OCI-LY7 (cell line): ENCODE measurements at regions of chr16 and their contacts with region 1.

Region 1: GRCh38 chr16:29848420-29849297 is 14.4 kb downstream of the CDIPT start:
- DNase-seq: peak; percentile 83
- H3K4me3 ChIP-seq: no peak overlapping the region
- H3K27ac ChIP-seq: no peak overlapping the region
- H3K4me1 ChIP-seq: no peaks in the 10 kb centered on the region
- CTCF ChIP-seq: peak; percentile 93

Region 2: GRCh38 chr16:29694384-29695195 is 154.1 kb before region 1 on chr16:
- CTCF ChIA-PET with region 1: no interaction called
- POLR2A ChIA-PET with region 1: no interaction called
- intact Hi-C with region 1: loop called (anchors 1 kb)
- DNase-seq: no peak
- H3K4me3 ChIP-seq: no peak overlapping the region
- H3K27ac ChIP-seq: no peak overlapping the region
- H3K4me1 ChIP-seq: peaks cover 7% of the 10 kb centered on the region
- CTCF ChIP-seq: no peak

Region 3: DNA sequence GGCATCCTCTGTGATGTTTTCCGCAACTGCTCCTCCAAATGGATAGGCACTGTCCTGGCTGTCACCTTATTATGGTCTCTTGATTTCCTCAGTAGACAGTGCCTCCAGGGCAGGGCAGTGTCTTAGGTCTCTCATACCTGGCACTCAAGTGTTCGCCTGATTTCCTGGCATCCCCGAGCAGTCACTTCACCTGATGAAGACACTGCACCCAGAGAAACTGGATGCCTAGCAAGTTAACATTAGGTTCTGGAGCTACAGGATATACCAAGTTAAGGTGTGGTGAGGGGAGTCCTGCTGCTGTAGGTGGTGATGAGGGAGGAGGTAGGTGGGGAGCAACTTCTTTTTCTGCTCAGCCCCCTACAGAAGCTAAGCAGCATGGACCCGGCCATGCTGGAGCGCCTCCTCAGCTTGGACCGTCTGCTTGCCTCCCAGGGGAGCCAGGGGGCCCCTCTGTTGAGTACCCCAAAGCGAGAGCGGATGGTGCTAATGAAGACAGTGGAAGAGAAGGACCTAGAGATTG is 46.2 kb before region 1 on chr16:
- CTCF ChIA-PET with region 1: no interaction called
- POLR2A ChIA-PET with region 1: no interaction called
- intact Hi-C with region 1: no loop called
- DNase-seq: no peak
- H3K4me3 ChIP-seq: no peak overlapping the region
- H3K27ac ChIP-seq: peak overlapping the region; percentile 88
- H3K4me1 ChIP-seq: peaks cover 30% of the 10 kb centered on the region
- CTCF ChIP-seq: no peak